ENCODE measurements at regions of chr15 and their contacts with region 1.

Region 1: GRCh38 chr15:44066316-44066740 is 128.7 kb downstream of the FRMD5 start:
- DNase-seq: peak in 4 of 10 donors; percentile 19 to 58 (median 28)
- H3K4me3 ChIP-seq: peak overlapping the region in 7 of 59 donors; percentile 0 to 39 (median 7)
- H3K27ac ChIP-seq: peak overlapping the region in 38 of 59 donors; percentile 3 to 75 (median 50)
- H3K27me3 ChIP-seq: no peaks in the 10 kb centered on the region
- CTCF ChIP-seq: peak; percentile 46 to 85 (median 72)

Region 2: GRCh38 chr15:43913026-43913927 is 153.1 kb before region 1 on chr15:
- intact Hi-C with region 1: loop called in 1 of 2 experiments (anchors 5 kb)
- DNase-seq: peak in 7 of 10 donors; percentile 32 to 69 (median 59)
- H3K4me3 ChIP-seq: no peak overlapping the region
- H3K27ac ChIP-seq: peak overlapping the region in 57 of 59 donors; percentile 0 to 97 (median 78)
- H3K27me3 ChIP-seq: no peaks in the 10 kb centered on the region
- CTCF ChIP-seq: peak in 1 of 56 donors; percentile 22

Region 3: DNA sequence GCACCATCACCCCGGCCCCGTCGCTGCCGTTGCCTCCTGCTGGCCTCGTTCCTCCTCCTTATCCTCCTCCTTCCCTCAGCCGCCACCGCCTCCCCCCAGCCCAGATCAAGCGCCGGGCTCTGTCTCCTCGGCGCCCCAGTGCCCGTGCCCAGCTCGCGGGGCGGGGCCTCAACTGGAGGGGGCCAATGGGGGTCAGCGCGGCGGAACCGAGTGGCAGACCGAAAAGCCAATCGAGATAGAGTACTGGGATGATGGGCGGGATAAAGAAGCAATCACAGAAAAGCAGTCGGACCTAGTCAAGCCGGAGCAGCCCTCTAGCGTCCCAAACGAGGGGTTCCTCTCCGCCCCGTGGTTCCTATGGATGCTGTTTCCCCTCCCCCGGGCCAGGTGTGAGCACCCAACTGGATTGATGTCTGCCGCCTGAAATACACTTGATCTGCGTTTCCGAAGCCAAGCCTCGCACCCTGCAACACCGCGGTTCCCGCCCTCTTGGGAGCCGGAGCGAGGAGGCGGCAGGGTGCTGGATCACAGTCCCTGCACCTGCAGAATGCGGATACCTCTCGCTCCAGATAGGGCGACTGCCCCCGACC is 128.9 kb after region 1 on chr15 and contains the start of gene FRMD5:
- intact Hi-C with region 1: loop called in 1 of 2 experiments (anchors 5 kb)
- DNase-seq: peak; percentile 92 to 97 (median 96)
- H3K4me3 ChIP-seq: peak within 1 kb of the TSS; percentile 60 to 98 (median 86)
- H3K27ac ChIP-seq: peak within 1 kb of the TSS; percentile 36 to 100 (median 92)
- H3K27me3 ChIP-seq: no peaks in the 10 kb centered on the region
- CTCF ChIP-seq: peak; percentile 23 to 80 (median 61)
- total RNA-seq, gene FRMD5: 19.7 to 90.4 (median 41.9) TPM

Region 4: GRCh38 chr15:44536962-44537734 is 470.8 kb after region 1 on chr15 and contains the start of gene EIF3J:
- intact Hi-C with region 1: no loop called
- DNase-seq: peak; percentile 86 to 96 (median 94)
- H3K4me3 ChIP-seq: peak within 1 kb of the TSS; percentile 67 to 99 (median 91)
- H3K27ac ChIP-seq: peak within 1 kb of the TSS; percentile 86 to 99 (median 96)
- H3K27me3 ChIP-seq: no peaks in the 10 kb centered on the region
- CTCF ChIP-seq: peak in 7 of 56 donors; percentile 0 to 42 (median 7)
- total RNA-seq, gene EIF3J: 45.5 to 100 (median 65.5) TPM

Region 5: DNA sequence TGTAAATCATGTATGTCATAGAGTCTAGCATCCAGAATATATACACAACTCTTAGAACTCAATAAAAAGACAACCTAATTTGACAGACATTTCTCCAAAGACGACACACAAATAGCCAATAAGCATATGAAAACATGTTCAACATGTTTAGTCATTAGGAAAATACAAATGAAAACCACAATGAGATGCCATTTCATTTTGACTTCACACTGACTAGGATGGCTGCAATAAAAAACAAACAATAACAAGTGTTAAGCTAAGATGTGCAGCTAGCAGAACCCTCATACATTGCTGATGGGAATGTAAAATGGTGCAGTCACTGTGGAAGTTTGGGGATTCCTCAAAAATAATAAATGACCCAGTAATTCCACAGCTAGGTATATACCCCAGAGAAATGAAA is 580.7 kb after region 1 on chr15:
- intact Hi-C with region 1: no loop called
- DNase-seq: no peak
- H3K4me3 ChIP-seq: no peak overlapping the region
- H3K27ac ChIP-seq: no peak overlapping the region
- H3K27me3 ChIP-seq: no peaks in the 10 kb centered on the region
- CTCF ChIP-seq: no peak